ENCODE measurements at regions of chr7 and their contacts with region 1.

Region 1: GRCh38 chr7:150538259-150538658 is 23.6 kb downstream of the GIMAP7 start:
- DNase-seq: no peak
- H3K4me3 ChIP-seq: no peak overlapping the region
- H3K27ac ChIP-seq: no peak overlapping the region
- H3K4me1 ChIP-seq: no peaks in the 10 kb centered on the region
- H3K27me3 ChIP-seq: no peaks in the 10 kb centered on the region
- CTCF ChIP-seq: no peak

Region 2: GRCh38 chr7:150502519-150502918 is 35.7 kb before region 1 on chr7:
- CTCF ChIA-PET with region 1: no interaction called
- dilution Hi-C with region 1: loop called (anchors 5 kb)
- in situ Hi-C with region 1: no loop called
- intact Hi-C with region 1: no loop called
- DNase-seq: no peak
- H3K4me3 ChIP-seq: no peak overlapping the region
- H3K27ac ChIP-seq: no peak overlapping the region
- H3K4me1 ChIP-seq: no peaks in the 10 kb centered on the region
- H3K27me3 ChIP-seq: no peaks in the 10 kb centered on the region
- CTCF ChIP-seq: no peak

Region 3: DNA sequence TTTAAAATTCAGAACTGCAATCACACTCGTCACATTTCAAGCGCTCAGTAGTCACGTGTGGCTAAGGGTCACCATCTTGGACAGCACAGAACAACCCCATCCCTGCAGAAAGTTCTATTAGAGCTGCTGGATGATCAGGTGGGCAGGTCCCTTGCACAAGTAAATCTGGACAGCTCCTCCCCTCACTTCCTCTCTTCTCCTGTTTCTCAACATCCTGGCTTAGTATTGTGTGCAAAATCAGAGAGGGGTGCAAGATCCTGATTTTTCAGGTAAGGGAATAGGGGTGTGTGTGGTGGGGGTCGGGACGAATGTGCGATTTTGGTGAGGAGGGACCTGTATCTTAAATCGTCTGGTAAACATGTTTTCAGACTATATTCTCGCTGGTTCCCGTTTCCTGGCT is 28.9 kb after region 1 on chr7 and contains the start of gene GIMAP4:
- CTCF ChIA-PET with region 1: no interaction called
- dilution Hi-C with region 1: no loop called
- in situ Hi-C with region 1: no loop called
- intact Hi-C with region 1: no loop called
- DNase-seq: no peak
- H3K4me3 ChIP-seq: no peak within 1 kb of the TSS
- H3K27ac ChIP-seq: no peak within 1 kb of the TSS
- H3K4me1 ChIP-seq: no peaks in the 10 kb centered on the region
- H3K27me3 ChIP-seq: no peaks in the 10 kb centered on the region
- CTCF ChIP-seq: no peak
- total RNA-seq, gene GIMAP4: not detected